ENCODE measurements at regions of chr3 and their contacts with region 1.

Region 1: DNA sequence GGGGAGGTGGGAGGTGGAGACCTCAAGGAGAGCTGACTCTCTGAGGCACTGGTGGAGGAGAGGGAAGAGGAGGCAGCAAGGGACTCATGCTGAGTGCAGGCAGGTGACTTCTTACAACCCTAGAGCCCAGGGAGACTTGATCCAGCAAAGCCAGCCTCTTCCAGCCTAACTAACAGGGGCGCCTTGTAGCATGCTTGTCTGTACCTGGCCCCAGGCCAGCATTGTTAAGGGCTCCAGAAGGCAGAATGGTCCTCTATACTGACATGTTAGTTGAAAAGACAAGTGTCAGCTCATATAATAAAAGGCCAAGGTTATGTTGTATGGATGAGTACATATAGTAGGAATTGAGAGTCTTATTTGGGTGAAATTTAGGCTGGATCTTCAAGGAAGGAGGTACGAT is 65.4 kb downstream of the CHDH start:
- DNase-seq: no peak
- H3K4me3 Mint-ChIP-seq: no peak overlapping the region
- H3K27ac Mint-ChIP-seq: no peak overlapping the region
- H3K4me1 Mint-ChIP-seq: no peaks in the 10 kb centered on the region
- H3K27me3 Mint-ChIP-seq: no peaks in the 10 kb centered on the region

Region 2: DNA sequence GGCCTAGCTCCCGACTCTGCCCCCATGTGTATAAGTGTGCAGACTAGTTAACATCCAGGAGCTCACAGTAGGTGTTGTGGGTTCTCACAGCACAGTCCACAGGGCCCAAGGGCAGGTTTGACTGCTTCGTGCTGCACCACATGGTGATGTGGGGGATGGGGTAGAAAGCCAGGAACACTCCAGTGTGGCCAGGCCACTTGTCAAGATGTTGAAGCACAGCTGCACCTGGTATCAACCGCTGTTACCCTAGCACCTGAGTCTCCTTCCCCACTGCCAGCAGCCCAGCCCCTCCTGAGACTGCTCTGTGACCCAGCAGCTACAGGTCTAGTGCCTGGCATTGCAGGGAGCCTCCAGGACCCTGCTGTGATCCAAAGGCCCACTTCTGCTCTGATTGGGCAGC is 12.1 kb after region 1 on chr3:
- CTCF ChIA-PET with region 1: no interaction called
- intact Hi-C with region 1: loop called (anchors 1 kb)
- DNase-seq: no peak
- H3K4me3 Mint-ChIP-seq: no peak overlapping the region
- H3K27ac Mint-ChIP-seq: no peak overlapping the region
- H3K4me1 Mint-ChIP-seq: no peaks in the 10 kb centered on the region
- H3K27me3 Mint-ChIP-seq: no peaks in the 10 kb centered on the region

Region 3: GRCh38 chr3:54374214-54374855 is 593.5 kb after region 1 on chr3:
- CTCF ChIA-PET with region 1: no interaction called
- intact Hi-C with region 1: no loop called
- DNase-seq: peak; percentile 26
- H3K4me3 Mint-ChIP-seq: no peak overlapping the region
- H3K27ac Mint-ChIP-seq: no peak overlapping the region
- H3K4me1 Mint-ChIP-seq: no peaks in the 10 kb centered on the region
- H3K27me3 Mint-ChIP-seq: peaks cover 7% of the 10 kb centered on the region

Measured in activated naive CD4-positive, alpha-beta T cell treated with anti-CD3 and anti-CD28 coated beads for 36 hours (primary cell).